ENCODE measurements at regions of chr5 and their contacts with region 1.

Region 1: GRCh38 chr5:150209020-150209635 is 19.3 kb downstream of the SLC6A7 start:
- DNase-seq: peak; percentile 75 to 94
- H3K4me3 ChIP-seq: peak overlapping the region; percentile 21 to 34
- H3K27ac ChIP-seq: peak overlapping the region; percentile 77 to 82
- H3K4me1 ChIP-seq: peaks cover 0 to 43% (median 21%) of the 10 kb centered on the region in 4 donors
- H3K27me3 ChIP-seq: no peaks in the 10 kb centered on the region
- CTCF ChIP-seq: peak in 1 of 2 experiments; percentile 3

Region 2: DNA sequence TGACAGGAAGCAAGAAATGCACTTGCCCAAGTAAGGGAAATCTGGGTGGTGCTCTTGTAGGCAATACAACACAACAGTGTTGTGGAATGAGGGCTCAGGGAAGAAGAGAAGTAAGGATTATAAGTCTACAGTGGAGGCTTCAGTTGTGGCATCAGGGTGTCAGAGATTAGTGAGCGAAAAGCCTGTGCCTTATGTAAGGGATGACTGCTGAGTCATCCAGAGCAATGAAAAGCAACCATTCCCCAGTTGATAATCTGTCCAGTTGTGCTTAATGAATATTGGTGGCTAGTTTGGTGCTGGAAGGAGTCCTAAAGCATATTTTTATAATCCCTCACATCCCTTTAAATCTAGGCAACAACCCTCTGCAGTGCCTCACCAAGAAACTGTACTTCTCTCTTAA is 1783.3 kb before region 1 on chr5:
- intact Hi-C with region 1: no loop called
- DNase-seq: no peak
- H3K4me3 ChIP-seq: no peak overlapping the region
- H3K27ac ChIP-seq: no peak overlapping the region
- H3K4me1 ChIP-seq: no peaks in the 10 kb centered on the region
- H3K27me3 ChIP-seq: no peaks in the 10 kb centered on the region
- CTCF ChIP-seq: no peak

Region 3: GRCh38 chr5:149878039-149878747 is 330.9 kb before region 1 on chr5:
- intact Hi-C with region 1: no loop called
- DNase-seq: no peak
- H3K4me3 ChIP-seq: no peak overlapping the region
- H3K27ac ChIP-seq: no peak overlapping the region
- H3K4me1 ChIP-seq: peaks cover 0 to under 1% (median 0%) of the 10 kb centered on the region in 4 donors
- H3K27me3 ChIP-seq: no peaks in the 10 kb centered on the region
- CTCF ChIP-seq: no peak

Region 4: DNA sequence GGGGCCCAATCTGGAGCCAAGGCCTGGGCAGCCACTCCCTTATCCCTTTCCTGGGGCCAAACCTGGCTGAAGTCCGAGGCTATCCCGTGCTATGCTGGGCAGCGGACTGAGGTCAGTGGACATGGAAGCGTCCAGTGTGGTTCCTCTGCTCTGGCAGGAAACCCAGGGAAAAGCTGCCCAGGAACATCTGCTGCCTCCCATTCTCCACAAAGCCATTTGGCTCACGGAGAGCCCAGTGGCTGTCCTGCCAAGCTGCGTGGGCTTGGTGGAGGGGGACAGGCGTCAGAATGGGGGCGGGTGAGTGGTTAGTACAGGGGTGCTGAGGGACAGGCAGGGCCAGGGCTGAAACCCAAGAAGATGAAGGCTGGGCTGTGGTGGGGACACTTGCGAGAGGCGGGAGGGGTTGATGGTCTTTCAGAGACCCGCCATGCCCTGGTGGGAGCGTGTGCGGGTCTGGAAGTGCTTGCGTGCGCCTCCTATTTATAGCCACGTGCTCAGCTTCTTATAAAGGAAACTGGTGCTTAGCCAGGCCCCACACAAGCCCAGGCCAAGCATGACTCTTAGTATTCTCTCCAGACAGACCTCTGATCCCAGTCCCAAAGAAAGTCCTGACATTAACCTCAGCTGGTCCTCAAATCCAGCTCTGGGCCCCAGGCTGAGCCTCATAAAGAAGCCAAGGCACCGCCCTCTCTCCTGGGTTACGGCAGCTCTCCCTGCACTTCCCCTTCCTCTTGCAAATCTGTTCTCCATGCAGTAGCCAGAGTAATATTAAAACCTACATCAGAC is 28.7 kb before region 1 on chr5:
- intact Hi-C with region 1: loop called (anchors 2 kb)
- DNase-seq: peak; percentile 93 to 99
- H3K4me3 ChIP-seq: no peak overlapping the region
- H3K27ac ChIP-seq: peak overlapping the region; percentile 93 to 96
- H3K4me1 ChIP-seq: peaks cover 8 to 68% (median 50%) of the 10 kb centered on the region in 4 donors
- H3K27me3 ChIP-seq: no peaks in the 10 kb centered on the region
- CTCF ChIP-seq: no peak

Measured in tibial artery (tissue), 4 donors.